OCI-LY7 (cell line): ENCODE measurements at regions of chr6 and their contacts with region 1.

Region 1: DNA sequence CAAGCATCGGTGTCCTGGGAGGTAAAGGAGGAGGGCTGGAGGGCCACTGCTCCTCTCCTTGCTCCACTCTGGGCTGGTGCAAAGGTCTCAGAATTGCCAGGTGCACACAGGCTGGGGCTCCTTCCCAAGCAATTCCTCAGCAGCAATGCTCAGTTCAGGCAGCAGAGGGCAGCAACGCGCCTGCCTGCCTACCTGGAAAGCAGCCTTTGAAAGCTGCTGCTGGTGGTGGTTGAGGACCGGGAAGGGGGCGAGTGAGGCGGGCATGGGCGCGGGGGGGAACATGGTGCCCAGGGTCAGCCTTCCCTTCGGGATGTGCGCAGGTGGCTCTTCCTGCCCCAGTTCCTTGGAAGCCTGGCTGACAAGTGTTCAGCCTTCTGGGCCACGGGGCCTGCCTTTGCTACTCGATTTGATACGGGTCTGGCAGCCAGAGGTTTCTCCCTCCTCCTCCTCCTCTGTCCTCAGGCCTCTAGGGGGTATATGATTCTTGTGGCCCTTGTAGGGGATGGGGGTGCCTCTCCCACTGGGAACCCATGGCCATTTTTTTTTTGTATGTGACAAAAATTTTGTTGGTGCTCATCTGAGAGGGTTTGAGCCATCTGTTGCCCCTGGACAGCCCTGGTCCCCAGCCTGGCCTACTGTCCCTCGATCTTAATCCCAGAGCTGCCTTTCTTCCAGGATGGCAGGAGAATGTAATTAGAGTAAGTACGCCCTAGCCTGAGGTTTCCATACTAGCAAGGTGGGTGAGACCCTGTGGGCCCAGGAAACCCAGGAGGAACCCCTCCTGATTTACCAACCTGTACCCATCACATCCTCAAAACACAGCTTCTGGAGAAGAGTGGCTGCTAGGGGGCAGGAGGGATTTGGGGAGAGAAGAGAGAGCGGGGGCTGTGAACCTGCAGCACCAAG is 20.1 kb downstream of the MRPS18A start:
- DNase-seq: peak; percentile 78
- H3K4me3 ChIP-seq: no peak overlapping the region
- H3K27ac ChIP-seq: no peak overlapping the region
- H3K4me1 ChIP-seq: peaks cover 10% of the 10 kb centered on the region
- CTCF ChIP-seq: peak; percentile 90

Region 2: GRCh38 chr6:43402820-43403219 is 264.7 kb before region 1 on chr6:
- CTCF ChIA-PET with region 1: no interaction called
- POLR2A ChIA-PET with region 1: no interaction called
- intact Hi-C with region 1: no loop called
- DNase-seq: no peak
- H3K4me3 ChIP-seq: no peak overlapping the region
- H3K27ac ChIP-seq: no peak overlapping the region
- H3K4me1 ChIP-seq: peaks cover 4% of the 10 kb centered on the region
- CTCF ChIP-seq: no peak

Region 3: GRCh38 chr6:43702534-43703440 is 35.3 kb after region 1 on chr6:
- CTCF ChIA-PET with region 1: interaction called, 3 read pairs
- POLR2A ChIA-PET with region 1: no interaction called
- intact Hi-C with region 1: loop called (anchors 2 kb)
- DNase-seq: peak; percentile 62
- H3K4me3 ChIP-seq: no peak overlapping the region
- H3K27ac ChIP-seq: no peak overlapping the region
- H3K4me1 ChIP-seq: peaks cover 59% of the 10 kb centered on the region
- CTCF ChIP-seq: no peak

Region 4: DNA sequence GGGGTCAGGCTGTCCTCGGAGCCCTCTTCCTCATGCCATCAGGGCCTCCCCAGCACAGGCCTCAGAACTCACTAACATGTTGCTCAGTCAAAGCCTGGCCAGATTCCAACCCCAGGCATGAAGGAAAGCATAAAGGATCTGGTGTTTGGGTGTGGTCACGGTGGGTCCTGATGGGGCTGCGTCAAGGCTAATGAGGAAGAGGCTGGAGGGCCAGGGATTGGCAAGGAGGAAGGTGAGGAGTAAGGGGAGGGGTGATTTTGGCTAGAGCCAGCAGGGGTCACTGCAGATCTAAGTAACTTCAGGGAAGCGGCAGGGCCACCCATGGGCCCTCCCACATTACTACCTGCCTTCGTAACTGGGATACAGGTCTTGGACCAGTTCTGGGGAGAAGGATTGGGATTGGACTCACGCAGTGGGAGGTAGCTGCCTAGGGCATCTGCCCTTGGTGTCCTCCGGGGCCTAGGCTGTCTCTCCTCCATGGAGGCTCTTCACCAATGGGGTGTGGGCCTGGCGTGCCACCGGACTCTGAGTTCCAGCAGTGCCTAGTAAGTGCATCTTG is 56.3 kb after region 1 on chr6:
- CTCF ChIA-PET with region 1: interaction called, 3 read pairs
- POLR2A ChIA-PET with region 1: interaction called, 3 read pairs
- intact Hi-C with region 1: loop called (anchors 1 kb)
- DNase-seq: peak; percentile 86
- H3K4me3 ChIP-seq: no peak overlapping the region
- H3K27ac ChIP-seq: no peak overlapping the region
- H3K4me1 ChIP-seq: peaks cover 25% of the 10 kb centered on the region
- CTCF ChIP-seq: peak; percentile 86

Region 5: GRCh38 chr6:43817192-43817591 is 149.7 kb after region 1 on chr6:
- CTCF ChIA-PET with region 1: no interaction called
- POLR2A ChIA-PET with region 1: no interaction called
- intact Hi-C with region 1: loop called (anchors 2 kb)
- DNase-seq: peak; percentile 42
- H3K4me3 ChIP-seq: no peak overlapping the region
- H3K27ac ChIP-seq: no peak overlapping the region
- H3K4me1 ChIP-seq: no peaks in the 10 kb centered on the region
- CTCF ChIP-seq: peak; percentile 64

Region 6: GRCh38 chr6:44002593-44003344 is 335.3 kb after region 1 on chr6:
- CTCF ChIA-PET with region 1: no interaction called
- POLR2A ChIA-PET with region 1: no interaction called
- intact Hi-C with region 1: loop called (anchors 5 kb)
- DNase-seq: peak; percentile 15
- H3K4me3 ChIP-seq: peak overlapping the region; percentile 22
- H3K27ac ChIP-seq: no peak overlapping the region
- H3K4me1 ChIP-seq: peaks cover 15% of the 10 kb centered on the region
- CTCF ChIP-seq: no peak